ENCODE measurements at regions of chr2 and their contacts with region 1.

Region 1: GRCh38 chr2:71276311-71277146 is 49.6 kb upstream of the PAIP2B start:
- DNase-seq: peak; percentile 15
- H3K4me3 ChIP-seq: peak overlapping the region; percentile 55
- H3K27ac ChIP-seq: no peak overlapping the region
- H3K27me3 ChIP-seq: peaks cover 25% of the 10 kb centered on the region
- CTCF ChIP-seq: no peak

Region 2: GRCh38 chr2:71208756-71209155 is 67.8 kb before region 1 on chr2:
- CTCF ChIA-PET with region 1: interaction called, 11 read pairs
- POLR2A ChIA-PET with region 1: no interaction called
- DNase-seq: no peak
- H3K4me3 ChIP-seq: no peak overlapping the region
- H3K27ac ChIP-seq: no peak overlapping the region
- H3K27me3 ChIP-seq: no peaks in the 10 kb centered on the region
- CTCF ChIP-seq: no peak

Region 3: DNA sequence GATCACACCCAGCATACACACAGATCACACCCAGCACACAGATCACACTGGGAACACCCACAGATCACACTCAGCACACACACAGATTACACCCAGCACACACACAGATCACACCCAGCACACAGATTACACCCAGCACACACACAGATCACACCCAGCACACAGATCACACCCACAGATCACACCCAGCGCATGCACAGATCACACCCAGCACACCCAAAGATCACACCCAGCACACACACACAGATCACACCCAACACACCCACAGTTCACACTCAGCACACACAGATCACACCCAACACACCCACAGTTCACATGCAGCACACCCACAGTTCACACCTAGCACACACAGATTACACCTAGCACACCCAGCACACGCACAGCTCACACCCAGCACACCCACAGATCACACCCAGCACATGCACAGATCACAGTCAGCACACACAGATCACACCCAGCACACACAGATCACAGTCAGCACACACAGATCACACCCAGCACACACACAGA is 294.5 kb after region 1 on chr2:
- CTCF ChIA-PET with region 1: no interaction called
- POLR2A ChIA-PET with region 1: no interaction called
- DNase-seq: no peak
- H3K4me3 ChIP-seq: no peak overlapping the region
- H3K27ac ChIP-seq: no peak overlapping the region
- H3K27me3 ChIP-seq: no peaks in the 10 kb centered on the region
- CTCF ChIP-seq: no peak

Measured in AG04450 (cell line).